ENCODE measurements at regions of chr2 and their contacts with region 1.

Region 1: GRCh38 chr2:26685989-26686839 is 6.3 kb upstream of the KCNK3 start:
- DNase-seq: peak; percentile 50

Region 2: DNA sequence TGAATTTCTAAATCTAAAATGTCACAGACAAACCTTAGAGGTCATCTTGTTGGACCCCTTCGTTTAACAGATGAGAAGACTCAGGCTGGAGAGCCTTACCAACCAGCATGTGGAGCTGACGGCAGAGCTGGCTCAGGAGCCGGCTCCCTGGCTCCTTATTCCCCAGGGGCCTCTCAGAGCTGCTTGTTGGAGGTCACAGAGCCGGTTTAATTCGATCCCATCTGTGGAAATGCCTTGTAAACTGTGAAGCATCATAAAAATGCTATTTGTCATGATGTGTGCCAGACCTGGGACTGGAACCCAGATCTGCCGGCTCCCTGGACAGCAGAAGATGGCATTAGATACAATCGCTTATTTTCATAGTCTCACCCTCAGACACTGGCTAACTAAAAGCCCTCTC is 36.9 kb before region 1 on chr2:
- intact Hi-C with region 1: loop called in 1 of 2 experiments (anchors 5 kb)
- DNase-seq: peak; percentile 53

Measured in posterior vena cava (tissue), 2 donors.